A673 (cell line): ENCODE measurements at regions of chr9 and their contacts with region 1.

Region 1: DNA sequence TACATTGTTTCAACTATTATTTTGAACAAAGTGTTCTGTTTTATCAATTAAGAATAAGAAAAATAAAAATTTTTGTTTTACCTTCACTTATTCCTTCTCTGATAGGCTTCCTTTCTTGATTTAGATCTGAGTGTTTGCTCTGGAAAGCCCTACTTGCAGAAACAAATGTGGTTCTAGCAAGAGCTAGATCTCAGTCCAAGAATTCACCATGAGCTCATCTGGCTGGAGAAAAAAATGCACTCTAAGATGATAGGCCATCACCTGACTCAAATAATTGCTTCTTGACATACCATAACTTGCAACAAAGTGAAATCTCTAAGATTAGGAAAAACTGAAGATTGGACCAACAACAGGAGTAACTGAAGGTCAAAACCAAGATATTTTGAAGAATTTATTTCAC is 6.3 kb upstream of the RLN2 start:
- DNase-seq: no peak
- H3K4me3 ChIP-seq: no peak overlapping the region
- H3K27ac ChIP-seq: no peak overlapping the region
- H3K4me1 ChIP-seq: no peaks in the 10 kb centered on the region
- H3K27me3 ChIP-seq: no peaks in the 10 kb centered on the region
- CTCF ChIP-seq: no peak

Region 2: GRCh38 chr9:5110867-5111713 is 199.8 kb before region 1 on chr9:
- CTCF ChIA-PET with region 1: no interaction called
- POLR2A ChIA-PET with region 1: no interaction called
- intact Hi-C with region 1: no loop called
- DNase-seq: no peak
- H3K4me3 ChIP-seq: no peak overlapping the region
- H3K27ac ChIP-seq: no peak overlapping the region
- H3K4me1 ChIP-seq: no peaks in the 10 kb centered on the region
- H3K27me3 ChIP-seq: no peaks in the 10 kb centered on the region
- CTCF ChIP-seq: no peak

Region 3: DNA sequence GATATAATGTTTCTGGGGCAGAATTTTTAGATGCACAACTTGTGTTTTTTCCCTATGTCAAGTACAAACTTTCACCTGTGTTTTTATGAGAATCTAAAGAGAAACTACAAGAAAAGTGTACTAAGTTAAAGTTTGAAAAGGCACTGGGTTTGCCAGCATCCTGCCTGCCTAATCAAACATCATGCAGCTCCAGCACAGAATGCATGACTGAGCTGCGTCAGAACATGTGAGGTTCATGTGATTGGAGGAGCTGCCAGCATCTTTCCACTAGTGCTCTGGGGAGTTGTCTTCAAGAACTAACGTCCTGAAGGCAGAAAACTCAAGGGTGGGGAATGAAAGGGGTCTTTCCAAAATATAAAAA is 272.0 kb after region 1 on chr9:
- CTCF ChIA-PET with region 1: no interaction called
- POLR2A ChIA-PET with region 1: no interaction called
- intact Hi-C with region 1: loop called (anchors 10 kb)
- DNase-seq: no peak
- H3K4me3 ChIP-seq: no peak overlapping the region
- H3K27ac ChIP-seq: no peak overlapping the region
- H3K4me1 ChIP-seq: no peaks in the 10 kb centered on the region
- H3K27me3 ChIP-seq: no peaks in the 10 kb centered on the region
- CTCF ChIP-seq: no peak

Region 4: DNA sequence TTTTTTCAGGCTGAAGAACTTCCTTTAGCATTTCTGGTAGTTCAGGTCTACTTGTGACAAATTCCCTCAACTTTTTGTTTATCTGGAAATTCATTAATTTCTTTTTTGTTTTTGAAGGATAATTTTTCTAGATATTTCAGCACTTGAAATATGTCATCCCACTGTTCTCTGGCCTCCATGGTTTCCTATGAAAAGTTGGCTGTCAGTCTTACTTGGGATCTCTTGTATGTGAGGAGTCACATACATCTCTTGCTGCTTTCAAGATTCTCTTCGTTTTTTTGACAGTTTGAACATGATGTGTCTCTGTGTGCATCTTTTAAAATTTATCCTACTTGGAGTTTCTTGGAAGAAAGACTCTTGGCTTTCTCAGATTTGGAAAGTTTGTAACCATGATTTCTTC is 397.6 kb after region 1 on chr9:
- CTCF ChIA-PET with region 1: no interaction called
- POLR2A ChIA-PET with region 1: no interaction called
- intact Hi-C with region 1: no loop called
- DNase-seq: peak; percentile 11
- H3K4me3 ChIP-seq: no peak overlapping the region
- H3K27ac ChIP-seq: no peak overlapping the region
- H3K4me1 ChIP-seq: no peaks in the 10 kb centered on the region
- H3K27me3 ChIP-seq: no peaks in the 10 kb centered on the region
- CTCF ChIP-seq: no peak